ENCODE measurements at regions of chr13 and their contacts with region 1.

Region 1: DNA sequence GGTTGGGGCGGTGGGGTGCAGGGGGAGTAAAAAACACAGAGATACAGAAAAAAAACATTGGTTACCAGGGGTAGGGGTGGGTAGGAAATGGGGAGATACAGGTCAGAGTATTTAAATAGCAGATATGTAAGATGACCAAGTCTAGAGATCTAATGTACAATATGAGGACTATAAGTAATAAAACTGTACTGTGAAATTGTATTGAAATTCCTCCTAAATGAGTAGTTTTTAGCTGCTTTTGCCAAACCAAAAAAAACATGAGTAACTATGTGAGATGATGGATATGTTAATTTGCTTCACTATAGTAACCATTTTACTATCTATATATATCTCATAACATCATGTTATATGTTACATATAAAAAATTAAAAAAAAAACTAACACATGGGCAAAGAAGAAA is 29.6 kb downstream of the VWA8 start:
- DNase-seq: no peak
- ATAC-seq: peak; percentile 53
- H3K4me3 Mint-ChIP-seq: no peak overlapping the region
- H3K27ac Mint-ChIP-seq: peak overlapping the region; percentile 60
- H3K4me1 Mint-ChIP-seq: peaks cover 64% of the 10 kb centered on the region
- H3K27me3 Mint-ChIP-seq: no peaks in the 10 kb centered on the region

Region 2: GRCh38 chr13:41905600-41906254 is 25.6 kb before region 1 on chr13:
- CTCF ChIA-PET with region 1: no interaction called
- POLR2A ChIA-PET with region 1: no interaction called
- intact Hi-C with region 1: no loop called
- DNase-seq: no peak
- ATAC-seq: peak; percentile 78
- H3K4me3 Mint-ChIP-seq: no peak overlapping the region
- H3K27ac Mint-ChIP-seq: peak overlapping the region; percentile 3
- H3K4me1 Mint-ChIP-seq: peaks cover 35% of the 10 kb centered on the region
- H3K27me3 Mint-ChIP-seq: no peaks in the 10 kb centered on the region

Region 3: GRCh38 chr13:41942462-41943094 is 11.2 kb after region 1 on chr13:
- CTCF ChIA-PET with region 1: interaction called, 11 read pairs
- POLR2A ChIA-PET with region 1: no interaction called
- intact Hi-C with region 1: no loop called
- DNase-seq: no peak
- ATAC-seq: no peak
- H3K4me3 Mint-ChIP-seq: no peak overlapping the region
- H3K27ac Mint-ChIP-seq: no peak overlapping the region
- H3K4me1 Mint-ChIP-seq: peaks cover 28% of the 10 kb centered on the region
- H3K27me3 Mint-ChIP-seq: no peaks in the 10 kb centered on the region